Testis (tissue), 5 donors: ENCODE measurements at regions of chr11 and their contacts with region 1.

Region 1: GRCh38 chr11:64152841-64153691 is 12.8 kb downstream of the MACROD1 start:
- DNase-seq: peak; percentile 73
- H3K4me3 ChIP-seq: no peak overlapping the region
- H3K27ac ChIP-seq: no peak overlapping the region
- H3K4me1 ChIP-seq: peaks cover 23% of the 10 kb centered on the region
- H3K27me3 ChIP-seq: no peaks in the 10 kb centered on the region
- CTCF ChIP-seq: peak; percentile 92 to 99 (median 95)
- POLR2A ChIP-seq: no peak

Region 2: DNA sequence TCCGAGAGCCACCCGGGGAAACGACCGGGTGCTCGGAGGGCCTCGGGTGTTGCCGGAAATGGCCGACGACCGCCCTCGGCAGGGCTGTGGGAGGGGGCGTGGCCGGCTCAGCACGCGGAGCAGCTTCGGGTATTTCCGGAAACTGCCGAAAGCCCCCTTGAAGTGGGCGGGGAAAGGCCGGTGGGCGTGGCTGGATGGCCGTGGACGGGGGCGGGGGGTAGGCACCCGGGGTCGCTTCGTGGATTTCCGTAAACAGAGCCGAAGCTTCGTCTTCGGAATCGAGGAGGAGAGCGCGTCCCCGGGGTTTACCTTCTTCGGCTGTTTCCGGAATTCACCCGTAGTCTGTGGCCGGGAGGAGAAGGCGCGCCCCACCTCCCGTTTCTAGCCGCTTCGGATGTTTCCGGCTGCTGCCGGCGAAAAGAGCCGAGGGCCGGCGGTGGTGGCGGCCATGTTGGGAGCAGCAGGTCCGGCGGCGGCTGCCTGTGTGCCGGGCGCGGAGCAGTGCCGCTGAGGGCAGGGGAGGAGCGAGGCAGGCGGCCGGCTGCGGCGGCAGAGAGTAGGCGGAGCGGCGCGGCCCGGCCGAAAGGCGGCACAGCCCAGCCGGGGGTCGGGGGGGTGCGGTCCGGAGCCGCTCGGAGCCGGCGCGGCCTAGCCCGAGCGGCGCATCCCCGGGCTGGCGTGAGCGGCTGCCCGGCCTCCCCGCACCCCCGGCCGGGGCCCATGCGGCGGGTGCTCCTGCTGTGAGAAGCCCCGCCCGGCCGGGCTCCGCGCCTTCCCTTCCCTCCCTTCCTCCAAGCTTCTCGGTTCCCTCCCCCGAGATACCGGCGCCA is 314.2 kb before region 1 on chr11 and contains the start of gene MARK2:
- intact Hi-C with region 1: loop called (anchors 10 kb)
- DNase-seq: peak; percentile 99
- H3K4me3 ChIP-seq: peak within 1 kb of the TSS; percentile 90 to 92
- H3K27ac ChIP-seq: peak within 1 kb of the TSS; percentile 86 to 92
- H3K4me1 ChIP-seq: peaks cover 23% of the 10 kb centered on the region
- H3K27me3 ChIP-seq: no peaks in the 10 kb centered on the region
- CTCF ChIP-seq: no peak
- POLR2A ChIP-seq: peak; percentile 44
- total RNA-seq, gene MARK2: 51.7 to 52.8 TPM

Region 3: DNA sequence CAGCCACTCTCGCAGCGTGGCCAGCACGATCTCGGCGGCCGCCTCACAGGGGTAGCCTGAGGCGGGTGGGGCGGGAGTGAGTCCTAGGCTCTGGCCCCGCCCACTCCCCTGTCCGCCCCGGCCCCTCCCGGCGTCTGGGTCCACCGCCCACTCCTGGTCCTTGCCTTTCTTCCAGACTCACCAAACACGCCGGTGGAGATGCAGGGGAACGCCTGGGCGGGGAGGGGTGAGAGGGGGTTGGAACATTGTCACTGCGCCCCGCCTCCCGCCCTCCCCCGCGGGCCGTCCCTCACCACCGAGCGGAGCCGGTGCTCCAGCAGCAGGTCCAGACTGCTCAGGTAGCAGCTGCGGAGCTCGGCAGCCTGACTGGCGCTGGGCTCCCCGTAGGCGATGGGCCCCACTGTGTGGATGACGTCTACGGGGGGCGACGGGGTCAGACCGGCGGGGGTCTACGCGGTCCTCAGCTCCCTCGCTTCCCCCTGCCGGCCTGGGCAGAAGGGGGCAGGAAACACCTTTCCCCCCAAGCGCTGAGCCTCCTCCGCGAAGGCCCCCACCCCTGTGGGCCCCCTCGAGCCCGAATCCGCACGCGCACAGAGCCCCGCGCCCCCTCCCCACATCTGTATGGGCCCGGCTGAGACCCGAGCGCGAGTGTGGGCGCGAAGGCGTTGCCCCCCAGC is 153.6 kb before region 1 on chr11:
- intact Hi-C with region 1: loop called (anchors 2 kb)
- DNase-seq: peak; percentile 44
- H3K4me3 ChIP-seq: peak overlapping the region in 1 of 2 donors; percentile 26
- H3K27ac ChIP-seq: no peak overlapping the region
- H3K4me1 ChIP-seq: peaks cover 19% of the 10 kb centered on the region
- H3K27me3 ChIP-seq: no peaks in the 10 kb centered on the region
- CTCF ChIP-seq: no peak
- POLR2A ChIP-seq: no peak